ENCODE measurements at regions of chr20 and their contacts with region 1.

Region 1: DNA sequence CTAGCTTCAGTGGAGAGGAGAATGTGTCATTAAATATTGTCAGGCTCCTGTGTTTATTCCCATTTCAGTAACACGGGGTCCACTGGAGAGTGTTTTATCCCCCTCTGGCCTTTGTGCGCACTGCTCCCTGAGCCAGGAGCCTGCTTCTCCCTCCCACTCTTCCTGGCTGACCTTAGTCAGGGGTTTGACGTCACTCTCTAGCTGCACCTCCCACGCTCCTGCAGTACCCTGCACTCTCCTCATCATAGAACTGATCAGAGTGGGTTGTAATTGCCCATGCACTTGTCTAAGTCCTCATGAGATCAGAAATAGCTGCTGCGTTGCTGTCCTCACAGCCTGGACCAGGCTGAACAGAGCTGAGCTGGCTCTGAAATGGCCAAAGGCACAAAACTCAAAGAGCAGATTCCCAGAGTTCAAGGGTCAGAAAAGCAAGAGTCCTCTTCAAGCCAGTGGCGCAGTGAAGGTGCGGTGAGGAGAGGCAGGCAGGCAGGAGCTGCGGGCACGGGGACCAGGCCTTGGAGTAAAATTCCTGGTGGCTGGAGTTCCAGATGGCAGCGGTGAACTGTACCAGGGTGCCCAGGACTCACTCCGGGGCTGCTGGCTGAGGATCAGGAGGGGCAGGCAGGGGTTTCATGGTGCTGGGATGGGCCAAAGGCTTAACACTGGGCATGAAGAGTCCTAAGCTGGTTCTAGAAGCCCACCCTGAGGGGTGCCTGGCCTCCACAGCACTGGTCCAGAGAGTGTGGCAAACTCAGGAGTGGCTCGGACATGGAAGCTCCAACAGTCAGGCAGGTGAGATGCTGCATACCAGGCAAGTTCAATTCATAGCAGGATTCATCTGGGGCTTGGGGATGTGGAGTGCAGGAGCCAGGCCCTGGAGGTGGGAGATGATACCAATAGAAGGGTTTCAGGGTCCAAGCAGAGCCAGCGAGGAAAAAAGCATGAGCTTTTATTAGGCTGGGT is 170.9 kb downstream of the SCP2D1 start:
- DNase-seq: no peak
- H3K4me3 ChIP-seq: no peak overlapping the region
- H3K27ac ChIP-seq: peak overlapping the region in 1 of 2 donors; percentile 88
- H3K4me1 ChIP-seq: no peaks in the 10 kb centered on the region
- H3K27me3 ChIP-seq: no peaks in the 10 kb centered on the region
- CTCF ChIP-seq: no peak
- POLR2A ChIP-seq: no peak

Region 2: DNA sequence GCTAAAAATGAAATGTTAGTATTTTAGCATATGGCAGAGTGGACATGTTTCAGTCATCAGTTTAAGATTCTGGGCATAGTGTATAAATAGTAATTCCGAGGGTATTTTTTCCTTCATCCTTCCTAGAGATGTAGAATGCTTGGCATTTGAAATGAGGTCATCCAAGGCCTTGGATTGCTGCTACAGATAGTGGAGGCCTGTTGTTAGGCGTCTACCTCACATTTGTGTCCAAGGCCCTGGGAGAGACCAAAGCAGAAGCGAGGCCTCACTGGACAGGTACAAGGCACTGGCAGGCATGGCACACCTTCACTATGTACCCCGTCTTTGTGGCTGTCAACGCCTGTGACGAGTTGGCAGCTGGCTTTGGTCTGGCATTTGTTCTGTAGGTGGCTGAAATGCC is 338.7 kb before region 1 on chr20:
- intact Hi-C with region 1: loop called (anchors 5 kb)
- DNase-seq: no peak
- H3K4me3 ChIP-seq: no peak overlapping the region
- H3K27ac ChIP-seq: no peak overlapping the region
- H3K4me1 ChIP-seq: no peaks in the 10 kb centered on the region
- H3K27me3 ChIP-seq: no peaks in the 10 kb centered on the region
- CTCF ChIP-seq: no peak
- POLR2A ChIP-seq: no peak

Region 3: GRCh38 chr20:18999076-18999475 is 14.6 kb after region 1 on chr20:
- intact Hi-C with region 1: no loop called
- DNase-seq: no peak
- H3K4me3 ChIP-seq: no peak overlapping the region
- H3K27ac ChIP-seq: no peak overlapping the region
- H3K4me1 ChIP-seq: no peaks in the 10 kb centered on the region
- H3K27me3 ChIP-seq: no peaks in the 10 kb centered on the region
- CTCF ChIP-seq: no peak
- POLR2A ChIP-seq: no peak

Measured in breast epithelium (tissue), 4 donors.